ENCODE measurements at regions of chr12 and their contacts with region 1.

Region 1: DNA sequence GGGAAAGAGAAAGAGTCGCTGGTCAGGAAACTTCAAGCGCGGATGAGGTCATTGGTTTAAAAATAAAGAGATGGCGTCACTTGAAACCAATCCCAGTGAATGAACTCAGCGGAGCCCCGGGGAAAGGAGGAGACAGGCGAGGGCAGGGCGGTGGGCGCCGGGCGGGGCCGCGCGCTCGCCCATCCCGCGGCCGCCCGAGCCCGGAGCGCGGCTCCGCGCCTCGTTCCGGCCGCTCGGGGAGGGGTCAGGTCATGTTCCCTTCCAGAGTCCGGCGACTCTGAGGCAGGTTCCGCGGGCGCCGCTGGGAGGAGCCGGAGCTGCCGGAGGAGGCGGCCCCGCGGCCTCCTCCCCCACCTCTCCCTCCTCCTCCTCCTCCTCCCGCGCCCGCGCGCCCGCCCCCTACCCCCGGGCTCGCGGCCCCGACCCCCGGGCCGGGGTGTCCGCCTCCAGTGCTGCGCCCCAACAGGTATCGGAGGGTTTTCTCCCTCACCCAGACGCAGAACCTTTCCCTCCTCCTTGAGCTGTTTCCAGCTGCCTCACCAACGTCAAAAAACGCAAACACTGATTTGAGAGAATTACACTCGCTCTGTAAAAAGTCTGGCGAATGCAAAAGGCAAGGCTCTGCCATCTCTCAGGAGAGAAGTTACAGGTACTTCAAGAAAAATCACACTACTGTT is at the start of gene DUSP16:
- DNase-seq: peak; percentile 75 to 92 (median 88)
- ATAC-seq: peak; percentile 85
- H3K4me3 ChIP-seq: peak within 1 kb of the TSS; percentile 62
- H3K4me3 Mint-ChIP-seq: peak within 1 kb of the TSS; percentile 87 to 97 (median 92)
- H3K27ac ChIP-seq: peak within 1 kb of the TSS; percentile 92
- H3K27ac Mint-ChIP-seq: peak within 1 kb of the TSS; percentile 94 to 100 (median 99)
- H3K4me1 ChIP-seq: peaks cover 14 to 16% of the 10 kb centered on the region in 2 donors
- H3K4me1 Mint-ChIP-seq: peaks cover 14 to 50% (median 37%) of the 10 kb centered on the region in 7 donors
- H3K27me3 ChIP-seq: no peaks in the 10 kb centered on the region
- H3K27me3 Mint-ChIP-seq: no peaks in the 10 kb centered on the region
- total RNA-seq, gene DUSP16: 26.8 to 42.8 (median 38.9) TPM

Region 2: GRCh38 chr12:12305568-12306300 is 257.0 kb before region 1 on chr12:
- CTCF ChIA-PET with region 1: no interaction called
- POLR2A ChIA-PET with region 1: no interaction called
- intact Hi-C with region 1: no loop called
- DNase-seq: no peak
- ATAC-seq: no peak
- H3K4me3 ChIP-seq: no peak overlapping the region
- H3K4me3 Mint-ChIP-seq: no peak overlapping the region
- H3K27ac ChIP-seq: no peak overlapping the region
- H3K27ac Mint-ChIP-seq: no peak overlapping the region
- H3K4me1 ChIP-seq: no peaks in the 10 kb centered on the region
- H3K4me1 Mint-ChIP-seq: no peaks in the 10 kb centered on the region
- H3K27me3 ChIP-seq: no peaks in the 10 kb centered on the region
- H3K27me3 Mint-ChIP-seq: peaks cover 0 to 12% (median 0%) of the 10 kb centered on the region in 5 donors

Region 3: DNA sequence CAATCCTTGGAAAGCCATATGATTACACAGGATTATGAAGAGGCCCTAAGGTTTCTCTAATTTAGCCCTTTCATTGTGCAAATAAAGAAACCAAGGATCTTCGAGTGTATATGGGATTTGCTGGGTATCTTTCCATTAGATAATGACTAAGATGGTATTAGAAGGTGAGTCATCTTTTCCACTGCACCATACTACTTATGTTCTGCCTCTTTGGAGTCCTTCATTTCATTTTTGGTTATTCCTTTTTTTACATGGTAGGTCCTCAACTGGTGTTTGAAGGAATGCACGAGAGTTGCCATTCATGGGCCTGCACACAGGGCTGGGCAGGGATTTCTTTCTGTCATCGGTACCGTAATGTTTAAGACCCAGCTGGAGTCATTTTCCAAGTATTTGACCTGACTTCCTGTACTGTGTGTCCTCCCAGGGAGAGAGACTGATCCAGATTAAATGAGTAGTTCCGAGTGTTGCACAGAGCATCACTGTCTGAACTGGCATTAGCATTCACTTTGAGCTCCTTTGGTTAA is 120.1 kb before region 1 on chr12:
- CTCF ChIA-PET with region 1: no interaction called
- POLR2A ChIA-PET with region 1: interaction called, 7 read pairs
- intact Hi-C with region 1: loop called (anchors 1 kb)
- DNase-seq: peak in 1 of 9 donors; percentile 32
- ATAC-seq: no peak
- H3K4me3 ChIP-seq: no peak overlapping the region
- H3K4me3 Mint-ChIP-seq: peak overlapping the region in 9 of 10 donors; percentile 9 to 78 (median 56)
- H3K27ac ChIP-seq: peak overlapping the region; percentile 61
- H3K27ac Mint-ChIP-seq: peak overlapping the region; percentile 92 to 99 (median 97)
- H3K4me1 ChIP-seq: peaks cover 52 to 54% of the 10 kb centered on the region in 2 donors
- H3K4me1 Mint-ChIP-seq: peaks cover 39 to 72% (median 66%) of the 10 kb centered on the region in 7 donors
- H3K27me3 ChIP-seq: no peaks in the 10 kb centered on the region
- H3K27me3 Mint-ChIP-seq: no peaks in the 10 kb centered on the region

Region 4: DNA sequence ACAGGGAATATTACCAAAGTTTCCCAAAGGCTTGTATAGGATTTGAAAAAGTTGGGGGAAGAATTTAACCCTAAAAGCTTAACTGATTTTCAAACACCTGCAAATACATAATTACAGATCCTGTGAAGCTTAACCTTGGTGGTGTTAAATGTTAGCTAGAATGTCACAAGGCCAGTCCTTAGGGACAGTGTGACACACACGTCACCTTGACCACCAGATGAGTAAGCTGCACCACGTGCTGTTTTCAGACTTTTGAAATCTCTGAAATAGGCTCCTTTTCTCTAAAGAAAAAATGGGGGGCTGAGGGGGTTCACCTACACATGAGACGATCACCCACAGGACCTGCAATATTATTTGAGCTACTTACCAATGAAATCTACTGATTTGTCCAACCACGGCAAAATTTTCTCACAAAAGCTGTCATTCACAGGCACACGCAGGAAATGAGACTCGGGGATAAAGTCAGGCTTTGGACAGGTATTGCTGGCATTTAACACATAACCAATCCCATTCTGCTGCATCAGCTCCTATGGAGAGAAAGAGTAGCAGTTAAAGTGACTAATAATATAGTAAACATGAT is 76.0 kb before region 1 on chr12:
- CTCF ChIA-PET with region 1: interaction called, 3 read pairs
- POLR2A ChIA-PET with region 1: interaction called, 12 read pairs
- intact Hi-C with region 1: loop called (anchors 1 kb)
- DNase-seq: no peak
- ATAC-seq: no peak
- H3K4me3 ChIP-seq: no peak overlapping the region
- H3K4me3 Mint-ChIP-seq: no peak overlapping the region
- H3K27ac ChIP-seq: no peak overlapping the region
- H3K27ac Mint-ChIP-seq: peak overlapping the region in 6 of 9 donors; percentile 48 to 83 (median 68)
- H3K4me1 ChIP-seq: peaks cover 15 to 16% of the 10 kb centered on the region in 2 donors
- H3K4me1 Mint-ChIP-seq: peaks cover 12 to 43% (median 37%) of the 10 kb centered on the region in 7 donors
- H3K27me3 ChIP-seq: no peaks in the 10 kb centered on the region
- H3K27me3 Mint-ChIP-seq: no peaks in the 10 kb centered on the region

Region 5: GRCh38 chr12:12611512-12612306 is 49.0 kb after region 1 on chr12 and contains the start of gene CREBL2:
- CTCF ChIA-PET with region 1: interaction called, 3 read pairs
- POLR2A ChIA-PET with region 1: interaction called, 12 read pairs
- intact Hi-C with region 1: loop called (anchors 1 kb)
- DNase-seq: peak; percentile 61 to 91 (median 89)
- ATAC-seq: peak; percentile 97
- H3K4me3 ChIP-seq: peak within 1 kb of the TSS; percentile 94
- H3K4me3 Mint-ChIP-seq: peak within 1 kb of the TSS; percentile 84 to 99 (median 93)
- H3K27ac ChIP-seq: peak within 1 kb of the TSS; percentile 98
- H3K27ac Mint-ChIP-seq: peak within 1 kb of the TSS; percentile 91 to 100 (median 99)
- H3K4me1 ChIP-seq: peaks cover 12 to 18% of the 10 kb centered on the region in 2 donors
- H3K4me1 Mint-ChIP-seq: peaks cover 38 to 74% (median 57%) of the 10 kb centered on the region in 7 donors
- H3K27me3 ChIP-seq: no peaks in the 10 kb centered on the region
- H3K27me3 Mint-ChIP-seq: no peaks in the 10 kb centered on the region
- total RNA-seq, gene CREBL2: 17.3 to 39.5 (median 24.9) TPM

Region 6: DNA sequence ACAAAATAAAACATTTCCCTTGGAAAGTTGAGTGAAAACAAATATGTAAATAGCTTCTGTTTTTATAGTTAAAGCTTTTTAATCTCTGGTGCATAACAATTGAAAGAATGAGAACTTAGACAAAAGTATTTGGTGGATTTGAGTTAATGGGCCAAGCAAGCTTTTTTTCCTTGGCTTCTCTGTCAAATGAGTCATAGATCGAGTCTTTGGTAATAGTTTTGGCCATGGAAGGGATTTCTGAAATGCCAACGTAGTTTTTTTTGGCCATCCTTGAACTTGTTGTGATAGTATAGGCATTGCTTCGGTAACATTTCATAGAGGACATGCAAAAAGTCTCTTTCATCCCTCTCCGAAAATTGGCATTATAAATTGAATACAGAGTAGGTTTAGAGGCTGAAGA is 98.4 kb after region 1 on chr12:
- CTCF ChIA-PET with region 1: interaction called, 3 read pairs
- POLR2A ChIA-PET with region 1: no interaction called
- intact Hi-C with region 1: loop called (anchors 1 to 5 kb)
- DNase-seq: no peak
- ATAC-seq: no peak
- H3K4me3 ChIP-seq: no peak overlapping the region
- H3K4me3 Mint-ChIP-seq: no peak overlapping the region
- H3K27ac ChIP-seq: no peak overlapping the region
- H3K27ac Mint-ChIP-seq: peak overlapping the region in 1 of 9 donors; percentile 82
- H3K4me1 ChIP-seq: no peaks in the 10 kb centered on the region
- H3K4me1 Mint-ChIP-seq: peaks cover 0 to 3% (median under 1%) of the 10 kb centered on the region in 7 donors
- H3K27me3 ChIP-seq: no peaks in the 10 kb centered on the region
- H3K27me3 Mint-ChIP-seq: no peaks in the 10 kb centered on the region

Region 7: GRCh38 chr12:12716793-12717585 is 154.3 kb after region 1 on chr12 and contains the start of gene CDKN1B:
- CTCF ChIA-PET with region 1: interaction called, 4 read pairs
- POLR2A ChIA-PET with region 1: interaction called, 21 read pairs
- intact Hi-C with region 1: loop called in 1 of 2 experiments (anchors 1 kb)
- DNase-seq: peak; percentile 68 to 91 (median 87)
- ATAC-seq: peak; percentile 77
- H3K4me3 ChIP-seq: peak within 1 kb of the TSS; percentile 94
- H3K4me3 Mint-ChIP-seq: peak within 1 kb of the TSS; percentile 87 to 100 (median 98)
- H3K27ac ChIP-seq: peak within 1 kb of the TSS; percentile 99
- H3K27ac Mint-ChIP-seq: peak within 1 kb of the TSS; percentile 97 to 99 (median 99)
- H3K4me1 ChIP-seq: peaks cover 24 to 39% of the 10 kb centered on the region in 2 donors
- H3K4me1 Mint-ChIP-seq: peaks cover 43 to 66% (median 55%) of the 10 kb centered on the region in 7 donors
- H3K27me3 ChIP-seq: no peaks in the 10 kb centered on the region
- H3K27me3 Mint-ChIP-seq: no peaks in the 10 kb centered on the region
- total RNA-seq, gene CDKN1B: 105 to 205 (median 191) TPM

Region 8: GRCh38 chr12:12786716-12787601 is 224.2 kb after region 1 on chr12:
- CTCF ChIA-PET with region 1: no interaction called
- POLR2A ChIA-PET with region 1: no interaction called
- intact Hi-C with region 1: loop called in 1 of 2 experiments (anchors 5 kb)
- DNase-seq: peak; percentile 62 to 78 (median 72)
- ATAC-seq: peak; percentile 92
- H3K4me3 ChIP-seq: peak overlapping the region; percentile 86
- H3K4me3 Mint-ChIP-seq: peak overlapping the region; percentile 76 to 89 (median 85)
- H3K27ac ChIP-seq: peak overlapping the region; percentile 78
- H3K27ac Mint-ChIP-seq: peak overlapping the region; percentile 62 to 96 (median 88)
- H3K4me1 ChIP-seq: peaks cover 6 to 9% of the 10 kb centered on the region in 2 donors
- H3K4me1 Mint-ChIP-seq: peaks cover 6 to 35% (median 17%) of the 10 kb centered on the region in 7 donors
- H3K27me3 ChIP-seq: no peaks in the 10 kb centered on the region
- H3K27me3 Mint-ChIP-seq: no peaks in the 10 kb centered on the region

Measured in naive thymus-derived CD4-positive, alpha-beta T cell (primary cell).